PC-3 (cell line): ENCODE measurements at regions of chr1 and their contacts with region 1.

Region 1: DNA sequence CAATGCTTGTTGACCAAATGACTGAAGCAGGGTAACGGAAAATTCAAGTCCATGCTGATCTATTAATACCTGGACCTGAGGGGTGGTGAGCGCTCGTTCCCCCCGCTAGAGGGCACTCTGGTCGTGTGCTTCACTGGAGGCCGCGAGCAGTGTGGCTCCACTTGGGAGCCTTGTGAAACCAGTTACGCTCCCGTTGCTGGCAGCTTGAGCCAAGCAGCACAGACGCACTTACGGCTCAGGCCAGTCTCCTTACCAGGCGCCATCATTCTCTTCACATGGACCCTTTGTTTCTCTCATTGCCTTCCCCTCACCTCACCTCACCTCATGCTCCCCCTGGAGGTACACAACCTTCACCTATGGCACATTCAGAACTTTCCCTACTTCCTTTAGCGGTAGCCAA is 49.7 kb upstream of the TSPAN2 start:
- DNase-seq: peak; percentile 95
- ATAC-seq: peak; percentile 66
- H3K4me3 ChIP-seq: no peak overlapping the region
- H3K27ac ChIP-seq: no peak overlapping the region
- H3K4me1 ChIP-seq: peaks cover 53% of the 10 kb centered on the region
- H3K27me3 ChIP-seq: no peaks in the 10 kb centered on the region
- CTCF ChIP-seq: peak; percentile 93

Region 2: DNA sequence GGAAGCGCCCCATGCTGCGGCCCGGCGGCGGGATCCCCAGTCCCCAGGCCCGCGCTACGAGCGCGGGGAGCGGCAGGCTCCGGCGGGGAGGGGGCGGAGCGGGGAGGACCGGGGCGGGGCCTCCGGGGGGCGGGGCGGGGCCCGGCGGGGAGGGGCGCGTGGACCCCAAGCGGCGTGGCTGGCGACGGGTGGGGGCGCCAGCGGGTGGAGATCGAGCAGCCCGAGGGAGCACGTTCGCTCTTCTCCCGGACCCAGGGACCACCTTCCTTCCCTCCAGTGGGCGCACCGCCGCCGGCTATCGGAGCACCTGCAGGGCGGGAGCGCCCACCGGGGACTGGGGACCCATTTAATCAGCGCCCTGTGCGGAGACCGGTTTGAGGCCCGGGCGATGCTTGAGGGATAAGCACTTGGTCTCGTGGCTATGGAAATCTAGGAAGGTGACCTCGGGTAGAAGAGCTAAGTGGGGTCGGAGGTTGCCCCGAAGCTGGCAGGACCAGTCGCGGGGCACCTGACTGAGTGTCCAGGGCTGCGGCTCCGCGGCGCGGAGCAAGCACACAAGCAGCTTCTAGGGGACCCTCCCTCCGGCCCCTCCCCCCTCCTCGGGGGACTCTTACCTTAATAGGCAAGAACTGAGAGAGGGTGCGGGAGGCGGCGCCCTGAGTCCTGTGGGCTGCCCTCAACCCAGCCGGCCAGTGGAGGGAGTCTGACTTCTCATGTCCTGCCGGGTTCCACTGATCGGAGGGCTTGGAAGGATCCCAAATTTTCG is 49.4 kb before region 1 on chr1 and contains the start of gene TSPAN2:
- CTCF ChIA-PET with region 1: no interaction called
- POLR2A ChIA-PET with region 1: no interaction called
- intact Hi-C with region 1: no loop called
- DNase-seq: peak; percentile 61
- ATAC-seq: peak; percentile 88
- H3K4me3 ChIP-seq: peak within 1 kb of the TSS; percentile 96
- H3K27ac ChIP-seq: no peak within 1 kb of the TSS
- H3K4me1 ChIP-seq: peaks cover 5% of the 10 kb centered on the region; the same call in 1 of the 2 replicates
- H3K27me3 ChIP-seq: no peaks in the 10 kb centered on the region
- CTCF ChIP-seq: peak; percentile 55
- total RNA-seq, gene TSPAN2: 1.3 and 1.7 TPM in 2 replicates

Region 3: GRCh38 chr1:115189814-115190539 is 51.0 kb after region 1 on chr1:
- CTCF ChIA-PET with region 1: interaction called, 10 read pairs
- POLR2A ChIA-PET with region 1: no interaction called
- intact Hi-C with region 1: no loop called
- DNase-seq: peak; percentile 94
- ATAC-seq: peak; percentile 98
- H3K4me3 ChIP-seq: no peak overlapping the region
- H3K27ac ChIP-seq: peak overlapping the region; percentile 85
- H3K4me1 ChIP-seq: peaks cover 31% of the 10 kb centered on the region
- H3K27me3 ChIP-seq: no peaks in the 10 kb centered on the region
- CTCF ChIP-seq: no peak

Region 4: DNA sequence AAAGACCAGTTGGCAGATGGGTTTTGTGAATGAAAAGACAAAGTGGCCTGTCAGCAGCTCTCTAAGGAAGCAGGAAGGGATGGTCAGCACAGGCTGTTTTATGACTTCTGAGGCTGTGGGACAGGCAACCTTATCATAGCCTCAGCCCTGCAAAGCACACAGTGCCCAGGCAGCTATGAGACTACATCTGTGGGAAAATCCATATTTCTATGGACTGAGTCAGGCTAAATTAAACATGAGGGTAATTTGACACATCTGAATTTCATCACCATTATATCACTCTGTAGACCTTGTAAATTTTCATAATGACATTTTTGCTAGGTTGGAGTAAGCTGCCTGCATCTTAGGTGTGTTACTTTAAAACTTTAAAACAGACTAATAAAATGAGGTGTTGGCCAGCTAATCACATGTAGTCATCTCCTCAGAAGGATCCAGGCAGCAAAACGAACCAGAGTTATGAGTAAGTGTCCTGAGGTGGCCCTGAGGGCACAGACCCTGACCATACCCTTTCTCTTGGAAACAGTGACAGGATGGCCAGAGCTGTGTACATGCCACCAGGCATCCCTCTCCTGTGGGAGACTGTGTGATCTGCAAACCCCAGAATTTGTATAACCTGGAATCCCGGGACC is 184.5 kb after region 1 on chr1:
- CTCF ChIA-PET with region 1: no interaction called
- POLR2A ChIA-PET with region 1: no interaction called
- intact Hi-C with region 1: loop called (anchors 2 kb)
- DNase-seq: peak; percentile 93
- ATAC-seq: peak; percentile 87
- H3K4me3 ChIP-seq: no peak overlapping the region
- H3K27ac ChIP-seq: peak overlapping the region; percentile 93
- H3K4me1 ChIP-seq: peaks cover 58% of the 10 kb centered on the region
- H3K27me3 ChIP-seq: no peaks in the 10 kb centered on the region
- CTCF ChIP-seq: no peak

Region 5: GRCh38 chr1:115469703-115470476 is 330.9 kb after region 1 on chr1:
- CTCF ChIA-PET with region 1: interaction called, 4 read pairs
- POLR2A ChIA-PET with region 1: no interaction called
- intact Hi-C with region 1: loop called (anchors 1 kb)
- DNase-seq: peak; percentile 86
- ATAC-seq: peak; percentile 76
- H3K4me3 ChIP-seq: peak overlapping the region; percentile 53
- H3K27ac ChIP-seq: peak overlapping the region; percentile 68
- H3K4me1 ChIP-seq: peaks cover 35% of the 10 kb centered on the region
- H3K27me3 ChIP-seq: no peaks in the 10 kb centered on the region
- CTCF ChIP-seq: peak; percentile 98

Region 6: GRCh38 chr1:115545791-115546733 is 407.1 kb after region 1 on chr1:
- CTCF ChIA-PET with region 1: no interaction called
- POLR2A ChIA-PET with region 1: no interaction called
- intact Hi-C with region 1: loop called (anchors 5 kb)
- DNase-seq: peak; percentile 97
- ATAC-seq: peak; percentile 89
- H3K4me3 ChIP-seq: peak overlapping the region; percentile 43; the same call in 1 of the 2 replicates
- H3K27ac ChIP-seq: peak overlapping the region; percentile 86
- H3K4me1 ChIP-seq: peaks cover 28% of the 10 kb centered on the region
- H3K27me3 ChIP-seq: no peaks in the 10 kb centered on the region
- CTCF ChIP-seq: peak; percentile 84